Colonic mucosa (tissue), 4 donors: ENCODE measurements at regions of chrX and their contacts with region 1.

Region 1: DNA sequence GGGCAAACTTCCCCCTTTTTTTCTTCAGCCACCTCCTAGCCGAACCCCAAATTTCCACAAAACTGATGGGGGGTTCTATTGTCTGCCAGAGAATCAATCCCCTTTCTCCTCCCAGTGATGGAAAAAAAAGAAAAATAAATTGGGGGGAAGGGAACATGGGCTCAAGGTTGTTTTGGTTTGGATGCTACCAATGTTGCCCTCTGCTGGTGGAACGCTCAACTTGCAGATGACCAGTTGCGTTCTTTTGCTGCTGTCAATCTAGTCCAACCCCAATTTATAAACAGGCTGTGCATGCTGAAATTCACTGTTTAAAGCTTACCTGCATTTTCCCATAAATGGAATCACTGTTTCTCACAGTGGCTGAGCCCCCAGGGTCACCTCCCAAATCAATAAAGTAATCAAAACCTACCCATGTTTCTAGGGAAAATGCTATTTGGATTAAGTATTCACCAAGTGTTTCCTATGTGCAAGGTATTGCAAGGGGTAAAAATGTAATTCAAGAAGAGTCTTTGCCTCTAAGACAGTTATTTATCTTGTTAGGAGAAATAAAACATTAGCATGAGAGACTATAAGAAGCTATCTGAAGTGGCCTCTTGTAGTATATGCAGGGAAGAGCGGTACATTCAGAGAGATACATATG is 116.7 kb upstream of the TMEM164 start:
- DNase-seq: peak; percentile 26
- H3K4me3 ChIP-seq: no peak overlapping the region
- H3K27ac ChIP-seq: no peak overlapping the region
- H3K4me1 ChIP-seq: no peaks in the 10 kb centered on the region
- H3K27me3 ChIP-seq: no peaks in the 10 kb centered on the region
- CTCF ChIP-seq: peak; percentile 62

Region 2: DNA sequence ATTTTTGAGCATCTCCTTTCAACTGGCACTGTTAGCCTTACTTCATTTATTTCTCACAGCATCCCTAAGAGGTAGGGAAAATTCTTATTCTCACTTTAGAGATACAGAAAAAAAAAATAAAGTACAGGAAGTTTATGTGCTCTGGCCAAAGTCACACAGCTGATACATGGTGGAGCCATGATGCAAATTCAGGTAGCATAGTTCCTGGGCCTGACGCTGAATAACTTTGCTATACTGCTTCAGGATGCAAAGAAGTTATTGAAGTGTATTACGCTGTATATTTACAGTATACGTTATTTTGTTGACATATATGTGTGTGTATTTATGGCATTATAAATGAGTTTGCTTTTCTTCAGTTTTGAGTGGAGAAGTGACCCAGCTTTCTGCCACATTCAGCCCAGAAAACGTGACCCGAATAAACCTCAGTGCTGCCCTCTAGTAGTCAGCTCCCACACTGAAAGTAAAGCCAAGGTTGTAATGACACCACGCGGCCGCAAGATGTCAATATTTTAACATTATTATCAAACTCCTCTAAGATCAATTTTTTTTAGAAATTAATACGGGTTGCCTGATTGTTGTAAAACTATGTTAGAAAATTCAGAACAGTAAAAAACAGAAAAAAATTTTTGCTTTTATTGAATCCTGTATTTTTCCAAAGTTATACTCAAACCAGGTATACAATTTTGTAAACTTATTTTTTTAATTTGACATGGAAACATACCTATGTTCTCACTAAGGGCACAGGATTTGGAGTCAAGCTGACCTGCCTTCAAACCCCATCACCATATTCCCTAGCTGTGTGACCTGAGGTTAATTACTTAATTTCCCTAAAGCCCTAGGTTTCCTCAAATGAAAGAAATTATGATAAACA is 400.5 kb before region 1 on chrX:
- intact Hi-C with region 1: loop called (anchors 10 kb)
- DNase-seq: peak; percentile 64
- H3K4me3 ChIP-seq: no peak overlapping the region
- H3K27ac ChIP-seq: no peak overlapping the region
- H3K4me1 ChIP-seq: no peaks in the 10 kb centered on the region
- H3K27me3 ChIP-seq: no peaks in the 10 kb centered on the region
- CTCF ChIP-seq: peak; percentile 96

Region 3: DNA sequence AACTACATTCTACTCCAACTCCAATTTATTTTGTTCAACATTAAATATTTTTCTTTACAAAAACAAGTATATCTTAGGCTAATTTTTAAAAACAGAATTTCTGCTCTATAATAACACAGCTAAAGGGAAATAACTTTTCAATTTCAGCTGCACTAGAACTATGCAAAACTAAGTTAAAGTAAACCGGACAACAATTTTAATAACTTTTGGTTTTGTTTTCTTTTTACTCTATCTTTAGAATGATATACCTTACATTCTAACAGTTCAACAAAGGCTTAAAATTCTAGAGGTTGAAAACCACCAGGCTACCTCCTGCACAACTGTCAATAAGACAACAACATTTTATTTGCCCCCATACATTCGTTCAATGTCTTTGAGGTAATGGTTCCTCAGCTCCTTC is 242.6 kb before region 1 on chrX:
- intact Hi-C with region 1: no loop called
- DNase-seq: no peak
- H3K4me3 ChIP-seq: no peak overlapping the region
- H3K27ac ChIP-seq: no peak overlapping the region
- H3K4me1 ChIP-seq: no peaks in the 10 kb centered on the region
- H3K27me3 ChIP-seq: no peaks in the 10 kb centered on the region
- CTCF ChIP-seq: no peak

Region 4: GRCh38 chrX:109714340-109714958 is 171.8 kb before region 1 on chrX:
- intact Hi-C with region 1: loop called (anchors 10 kb)
- DNase-seq: no peak
- H3K4me3 ChIP-seq: no peak overlapping the region
- H3K27ac ChIP-seq: no peak overlapping the region
- H3K4me1 ChIP-seq: no peaks in the 10 kb centered on the region
- H3K27me3 ChIP-seq: no peaks in the 10 kb centered on the region
- CTCF ChIP-seq: no peak

Region 5: GRCh38 chrX:110219920-110220319 is 333.7 kb after region 1 on chrX:
- intact Hi-C with region 1: no loop called
- DNase-seq: no peak
- H3K4me3 ChIP-seq: no peak overlapping the region
- H3K27ac ChIP-seq: no peak overlapping the region
- H3K4me1 ChIP-seq: no peaks in the 10 kb centered on the region
- H3K27me3 ChIP-seq: no peaks in the 10 kb centered on the region
- CTCF ChIP-seq: no peak